Ascending aorta (tissue), 2 donors: ENCODE measurements at regions of chr3 and their contacts with region 1.

Region 1: GRCh38 chr3:139343895-139344856 is at the start of gene MRPS22:
- DNase-seq: peak; percentile 43 to 89
- H3K4me3 ChIP-seq: peak within 1 kb of the TSS; percentile 76 to 90
- H3K27ac ChIP-seq: peak within 1 kb of the TSS; percentile 66 to 73
- H3K4me1 ChIP-seq: peaks cover 0 to 12% of the 10 kb centered on the region in 2 donors
- H3K27me3 ChIP-seq: no peaks in the 10 kb centered on the region
- CTCF ChIP-seq: no peak
- total RNA-seq, gene MRPS22: 8.3 TPM

Region 2: DNA sequence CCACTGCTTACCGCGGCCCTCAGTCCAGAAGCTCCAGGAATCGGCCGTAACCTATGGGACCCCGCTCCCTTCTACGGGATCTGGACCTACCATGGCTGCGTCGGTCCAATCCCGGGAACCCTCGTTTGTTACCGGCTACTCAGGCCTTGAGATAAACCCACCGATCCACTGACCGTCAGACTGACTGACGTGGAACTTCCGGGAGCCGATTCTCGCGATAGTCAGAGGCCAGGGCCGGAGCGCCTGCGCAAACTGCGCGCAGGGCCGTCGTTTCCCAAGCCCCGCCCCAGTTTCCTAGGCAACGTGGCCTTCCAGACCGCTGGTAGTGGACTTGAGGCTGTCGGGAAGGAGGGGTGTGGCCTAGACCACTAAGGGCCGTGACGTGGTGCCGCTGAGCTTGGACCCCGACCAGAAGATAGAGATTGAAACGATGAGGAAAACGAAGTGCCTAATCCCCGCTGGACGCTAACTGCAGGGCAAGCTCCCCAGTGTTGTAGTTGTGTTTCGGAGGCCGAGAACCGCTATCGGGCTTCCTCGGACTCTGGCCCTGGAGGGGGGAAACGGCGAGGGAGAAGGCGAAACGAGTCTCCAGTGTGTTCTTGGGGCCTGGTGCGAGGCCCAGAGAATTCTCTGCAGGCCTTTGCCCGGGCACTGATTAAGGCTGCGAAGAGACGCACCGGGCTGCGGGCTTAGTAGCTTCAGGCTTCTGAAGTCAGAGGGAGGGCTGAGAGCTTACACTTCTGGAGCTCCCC is 45.5 kb after region 1 on chr3 and contains the start of gene COPB2:
- intact Hi-C with region 1: loop called (anchors 2 kb)
- DNase-seq: peak; percentile 97 to 100
- H3K4me3 ChIP-seq: peak within 1 kb of the TSS; percentile 98 to 99
- H3K27ac ChIP-seq: peak within 1 kb of the TSS; percentile 96
- H3K4me1 ChIP-seq: peaks cover 3 to 25% of the 10 kb centered on the region in 2 donors
- H3K27me3 ChIP-seq: no peaks in the 10 kb centered on the region
- CTCF ChIP-seq: no peak
- total RNA-seq, gene COPB2: 26.6 TPM

Region 3: GRCh38 chr3:139893267-139893962 is 549.2 kb after region 1 on chr3:
- intact Hi-C with region 1: no loop called
- DNase-seq: no peak
- H3K4me3 ChIP-seq: no peak overlapping the region
- H3K27ac ChIP-seq: no peak overlapping the region
- H3K4me1 ChIP-seq: no peaks in the 10 kb centered on the region
- H3K27me3 ChIP-seq: no peaks in the 10 kb centered on the region
- CTCF ChIP-seq: no peak